ENCODE measurements at regions of chr15 and their contacts with region 1.

Region 1: DNA sequence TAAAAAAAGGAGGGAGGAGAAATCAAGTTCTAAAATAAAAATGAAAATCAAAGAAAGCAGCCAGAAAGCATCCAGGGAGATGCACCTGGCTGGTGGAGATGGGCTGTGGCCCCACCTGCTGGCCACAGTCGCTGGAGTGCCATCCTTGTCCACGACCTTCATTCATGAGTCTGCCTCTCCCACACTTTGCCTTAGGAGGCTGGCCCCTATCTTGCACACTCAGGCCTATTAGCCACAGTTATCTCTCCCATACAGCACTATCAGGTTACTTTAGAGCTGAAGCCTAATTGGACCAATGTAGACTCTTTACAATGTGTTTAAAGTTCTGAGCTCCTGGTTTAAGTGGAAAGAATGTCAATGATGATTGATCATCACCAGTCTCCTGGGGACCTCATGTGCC is 392.0 kb upstream of the RORA start:
- DNase-seq: peak; percentile 43
- ATAC-seq: no peak
- H3K4me3 ChIP-seq: no peak overlapping the region
- H3K27ac ChIP-seq: no peak overlapping the region
- H3K4me1 ChIP-seq: no peaks in the 10 kb centered on the region
- H3K27me3 ChIP-seq: peaks cover 20% of the 10 kb centered on the region
- CTCF ChIP-seq: peak; percentile 64

Region 2: DNA sequence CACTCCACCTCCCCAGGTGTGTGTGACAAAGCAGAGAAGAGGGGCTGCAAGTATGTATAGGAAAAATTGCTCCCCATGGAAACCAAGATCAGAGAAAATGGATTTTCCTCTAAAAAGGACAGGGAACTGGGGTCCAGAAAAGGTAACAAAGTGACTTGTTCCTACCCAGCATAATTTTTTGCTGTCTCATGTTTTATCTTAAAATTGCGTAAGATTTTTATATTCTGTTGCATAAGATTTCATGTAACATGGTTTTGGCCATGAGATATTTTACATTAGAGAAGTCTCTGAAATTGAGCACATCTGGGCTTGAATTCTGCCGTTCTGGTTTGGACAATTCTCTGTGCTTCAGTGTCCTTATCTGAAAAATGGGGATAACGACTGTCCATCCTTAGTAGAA is 56.4 kb before region 1 on chr15:
- CTCF ChIA-PET with region 1: no interaction called
- POLR2A ChIA-PET with region 1: no interaction called
- intact Hi-C with region 1: no loop called
- DNase-seq: no peak
- ATAC-seq: no peak
- H3K4me3 ChIP-seq: no peak overlapping the region
- H3K27ac ChIP-seq: no peak overlapping the region
- H3K4me1 ChIP-seq: no peaks in the 10 kb centered on the region
- H3K27me3 ChIP-seq: peaks cover 9% of the 10 kb centered on the region; the same call in 1 of the 2 replicates
- CTCF ChIP-seq: no peak

Region 3: GRCh38 chr15:61681038-61681418 is 59.9 kb after region 1 on chr15:
- CTCF ChIA-PET with region 1: no interaction called
- POLR2A ChIA-PET with region 1: no interaction called
- intact Hi-C with region 1: no loop called
- DNase-seq: no peak
- ATAC-seq: no peak
- H3K4me3 ChIP-seq: no peak overlapping the region
- H3K27ac ChIP-seq: no peak overlapping the region
- H3K4me1 ChIP-seq: no peaks in the 10 kb centered on the region
- H3K27me3 ChIP-seq: peaks cover 16% of the 10 kb centered on the region
- CTCF ChIP-seq: no peak

Region 4: GRCh38 chr15:61736790-61737189 is 115.6 kb after region 1 on chr15:
- CTCF ChIA-PET with region 1: no interaction called
- POLR2A ChIA-PET with region 1: no interaction called
- intact Hi-C with region 1: no loop called
- DNase-seq: no peak
- ATAC-seq: no peak
- H3K4me3 ChIP-seq: no peak overlapping the region
- H3K27ac ChIP-seq: no peak overlapping the region
- H3K4me1 ChIP-seq: no peaks in the 10 kb centered on the region
- H3K27me3 ChIP-seq: peaks cover 15% of the 10 kb centered on the region; the same call in 1 of the 2 replicates
- CTCF ChIP-seq: no peak

Region 5: GRCh38 chr15:61834076-61834697 is 213.0 kb after region 1 on chr15:
- CTCF ChIA-PET with region 1: no interaction called
- POLR2A ChIA-PET with region 1: no interaction called
- intact Hi-C with region 1: loop called (anchors 10 kb)
- DNase-seq: peak; percentile 83
- ATAC-seq: peak; percentile 79
- H3K4me3 ChIP-seq: no peak overlapping the region
- H3K27ac ChIP-seq: no peak overlapping the region
- H3K4me1 ChIP-seq: no peaks in the 10 kb centered on the region
- H3K27me3 ChIP-seq: no peaks in the 10 kb centered on the region
- CTCF ChIP-seq: peak; percentile 88

Region 6: DNA sequence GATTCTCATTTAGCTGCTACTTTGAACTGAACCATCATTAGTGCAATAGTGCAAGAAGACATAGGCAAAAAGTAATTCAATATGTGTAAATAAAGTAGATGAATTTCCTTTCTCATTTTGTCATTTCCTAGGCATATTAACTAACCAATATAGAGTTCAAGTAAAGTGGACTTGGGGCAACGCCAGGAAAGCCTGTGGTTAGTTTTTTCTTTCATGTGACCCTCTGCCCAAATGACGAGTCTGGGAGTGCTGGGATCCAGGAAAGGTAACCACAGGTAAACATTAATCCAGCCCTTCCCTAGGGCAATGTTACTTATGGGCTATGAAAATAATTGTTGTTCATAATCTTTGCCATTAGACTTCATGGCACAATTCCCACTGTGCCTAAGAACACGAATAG is 258.1 kb after region 1 on chr15:
- CTCF ChIA-PET with region 1: no interaction called
- POLR2A ChIA-PET with region 1: no interaction called
- intact Hi-C with region 1: no loop called
- DNase-seq: peak; percentile 95
- ATAC-seq: peak; percentile 95
- H3K4me3 ChIP-seq: no peak overlapping the region
- H3K27ac ChIP-seq: peak overlapping the region; percentile 62
- H3K4me1 ChIP-seq: peaks cover 17% of the 10 kb centered on the region
- H3K27me3 ChIP-seq: no peaks in the 10 kb centered on the region
- CTCF ChIP-seq: no peak

Measured in PC-3 (cell line).